ENCODE measurements at regions of chr6 and their contacts with region 1.

Region 1: DNA sequence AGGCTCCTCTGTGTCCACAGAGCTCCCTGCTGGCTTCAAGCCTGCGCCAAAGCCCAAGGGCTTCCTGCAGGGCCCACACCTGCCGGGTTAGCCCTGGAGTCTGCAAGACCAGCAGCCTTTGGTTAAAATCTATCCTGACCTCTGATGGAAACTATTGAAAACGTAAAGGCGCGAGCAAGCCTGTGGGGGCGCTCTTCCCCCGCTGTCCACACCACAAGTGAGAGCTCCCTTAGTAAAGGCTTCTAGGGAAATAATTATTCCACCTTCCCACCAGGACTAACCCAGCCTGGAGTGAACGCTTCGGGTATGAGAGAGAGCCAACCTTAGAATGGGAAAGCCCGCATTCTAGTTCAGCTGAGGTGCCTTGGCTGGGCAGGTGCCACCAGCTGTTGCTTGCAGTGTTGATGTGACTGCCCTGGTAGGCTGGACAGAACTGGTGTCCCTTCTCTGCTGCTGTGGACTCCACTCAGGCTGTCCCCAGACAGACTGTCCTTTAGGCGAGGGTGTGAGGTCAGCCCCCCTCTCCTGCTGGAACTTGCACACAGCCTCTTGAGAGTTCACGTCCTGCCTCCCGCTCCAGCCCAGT is 68.7 kb downstream of the SYTL3 start:
- DNase-seq: peak; percentile 44
- H3K4me3 ChIP-seq: no peak overlapping the region
- H3K27ac ChIP-seq: no peak overlapping the region
- H3K4me1 ChIP-seq: peaks cover 13% of the 10 kb centered on the region
- H3K27me3 ChIP-seq: no peaks in the 10 kb centered on the region
- CTCF ChIP-seq: peak; percentile 66 to 70
- POLR2A ChIP-seq: no peak

Region 2: DNA sequence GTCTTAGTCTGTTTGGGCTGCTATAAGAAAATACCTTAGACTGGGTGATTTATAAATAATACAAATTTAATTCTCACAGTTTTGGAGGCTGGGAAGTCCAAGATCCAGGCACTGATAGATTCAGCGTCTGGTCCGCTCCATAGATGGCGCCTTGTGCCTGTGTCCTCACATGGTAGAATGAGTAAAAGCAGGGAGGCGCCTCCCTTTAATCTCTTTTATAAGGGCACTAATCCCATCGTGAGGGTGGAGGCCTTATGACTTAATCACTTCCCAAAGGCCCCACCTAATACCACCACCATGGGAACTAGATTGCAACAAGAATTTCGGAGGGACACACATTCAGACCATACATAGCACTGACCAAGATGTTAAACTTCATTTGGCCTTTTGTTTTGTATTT is 249.9 kb before region 1 on chr6:
- CTCF ChIA-PET with region 1: no interaction called
- POLR2A ChIA-PET with region 1: interaction called, 13 read pairs
- dilution Hi-C with region 1: no loop called
- intact Hi-C with region 1: no loop called
- DNase-seq: no peak
- H3K4me3 ChIP-seq: no peak overlapping the region
- H3K27ac ChIP-seq: no peak overlapping the region
- H3K4me1 ChIP-seq: peaks cover 7% of the 10 kb centered on the region
- H3K27me3 ChIP-seq: no peaks in the 10 kb centered on the region
- CTCF ChIP-seq: no peak
- POLR2A ChIP-seq: no peak

Region 3: GRCh38 chr6:158666628-158667359 is 51.8 kb before region 1 on chr6:
- CTCF ChIA-PET with region 1: no interaction called
- POLR2A ChIA-PET with region 1: no interaction called
- dilution Hi-C with region 1: no loop called
- intact Hi-C with region 1: no loop called
- DNase-seq: no peak
- H3K4me3 ChIP-seq: no peak overlapping the region
- H3K27ac ChIP-seq: no peak overlapping the region
- H3K4me1 ChIP-seq: no peaks in the 10 kb centered on the region
- H3K27me3 ChIP-seq: peaks cover 19 to 26% of the 10 kb centered on the region in 2 experiments
- CTCF ChIP-seq: no peak
- POLR2A ChIP-seq: no peak

Region 4: DNA sequence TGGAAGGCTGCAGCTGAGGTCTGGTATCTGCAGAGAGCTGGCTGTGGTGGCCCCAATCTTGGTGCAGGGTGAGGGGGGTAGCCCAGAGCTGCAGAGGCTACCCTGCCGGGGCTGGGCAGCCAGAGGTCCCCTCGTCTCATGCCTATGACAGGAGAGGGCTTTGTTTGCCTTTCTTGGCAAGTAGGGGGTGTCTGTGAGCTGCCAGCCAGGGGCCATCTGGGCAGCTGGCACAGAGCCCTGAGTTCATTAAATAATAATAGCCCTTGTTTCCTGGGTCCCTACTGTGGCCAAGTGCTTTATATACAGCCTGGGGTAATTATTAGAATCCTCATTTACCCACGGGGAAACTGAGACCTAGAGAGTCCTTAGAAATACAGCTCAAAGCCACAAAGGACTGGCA is 34.1 kb after region 1 on chr6:
- CTCF ChIA-PET with region 1: interaction called, 13 read pairs
- POLR2A ChIA-PET with region 1: no interaction called
- dilution Hi-C with region 1: no loop called
- intact Hi-C with region 1: no loop called
- DNase-seq: no peak
- H3K4me3 ChIP-seq: no peak overlapping the region
- H3K27ac ChIP-seq: no peak overlapping the region
- H3K4me1 ChIP-seq: peaks cover 7% of the 10 kb centered on the region
- H3K27me3 ChIP-seq: no peaks in the 10 kb centered on the region
- CTCF ChIP-seq: no peak
- POLR2A ChIP-seq: no peak

Region 5: GRCh38 chr6:158793432-158793831 is 74.9 kb after region 1 on chr6:
- CTCF ChIA-PET with region 1: interaction called, 12 read pairs
- POLR2A ChIA-PET with region 1: no interaction called
- dilution Hi-C with region 1: no loop called
- intact Hi-C with region 1: no loop called
- DNase-seq: peak; percentile 37
- H3K4me3 ChIP-seq: no peak overlapping the region
- H3K27ac ChIP-seq: no peak overlapping the region
- H3K4me1 ChIP-seq: no peaks in the 10 kb centered on the region
- H3K27me3 ChIP-seq: no peaks in the 10 kb centered on the region
- CTCF ChIP-seq: peak; percentile 7 to 33
- POLR2A ChIP-seq: no peak

Region 6: GRCh38 chr6:158819213-158819909 is 100.8 kb after region 1 on chr6 and contains the start of gene EZR:
- CTCF ChIA-PET with region 1: no interaction called
- POLR2A ChIA-PET with region 1: no interaction called
- dilution Hi-C with region 1: no loop called
- intact Hi-C with region 1: loop called (anchors 2 kb)
- DNase-seq: peak; percentile 58
- H3K4me3 ChIP-seq: peak within 1 kb of the TSS; percentile 84 to 98 (median 87)
- H3K27ac ChIP-seq: peak within 1 kb of the TSS; percentile 48
- H3K4me1 ChIP-seq: peaks cover 16% of the 10 kb centered on the region
- H3K27me3 ChIP-seq: no peaks in the 10 kb centered on the region
- CTCF ChIP-seq: no peak
- POLR2A ChIP-seq: no peak
- total RNA-seq, gene EZR: 105 and 108 TPM in 2 replicates

Region 7: DNA sequence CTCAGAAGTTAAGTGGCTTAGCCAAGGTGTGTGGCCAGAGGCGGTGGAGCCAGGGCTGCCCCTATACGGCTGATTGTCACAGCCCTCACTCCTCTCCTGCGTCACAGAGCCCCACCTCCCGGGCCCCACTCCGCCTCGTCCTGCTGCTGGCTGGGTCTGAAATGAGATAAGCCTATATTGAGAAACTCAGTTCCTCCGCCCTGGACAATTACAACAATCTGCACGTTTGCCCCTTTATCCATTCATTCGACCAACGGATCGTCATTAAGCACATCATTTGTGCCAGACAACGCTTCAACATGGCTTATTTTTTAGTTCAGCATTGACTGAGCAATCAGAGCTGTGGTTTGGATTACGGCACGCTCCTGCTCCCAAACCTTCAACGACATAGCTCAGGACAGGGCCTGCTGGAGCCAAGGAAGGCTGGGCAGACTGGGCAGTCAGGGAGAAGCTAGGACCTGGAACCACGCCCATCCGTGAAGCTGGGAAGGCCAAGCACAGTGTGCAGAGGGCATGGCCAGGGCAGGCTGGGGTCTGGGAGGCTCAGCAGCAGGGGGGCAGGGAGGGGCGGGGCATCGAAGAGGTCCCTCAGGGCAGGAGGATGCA is 117.2 kb after region 1 on chr6:
- CTCF ChIA-PET with region 1: no interaction called
- POLR2A ChIA-PET with region 1: no interaction called
- dilution Hi-C with region 1: no loop called
- intact Hi-C with region 1: no loop called
- DNase-seq: no peak
- H3K4me3 ChIP-seq: no peak overlapping the region
- H3K27ac ChIP-seq: no peak overlapping the region
- H3K4me1 ChIP-seq: no peaks in the 10 kb centered on the region
- H3K27me3 ChIP-seq: peaks cover 2% of the 10 kb centered on the region in 2 experiments
- CTCF ChIP-seq: no peak
- POLR2A ChIP-seq: no peak

Region 8: DNA sequence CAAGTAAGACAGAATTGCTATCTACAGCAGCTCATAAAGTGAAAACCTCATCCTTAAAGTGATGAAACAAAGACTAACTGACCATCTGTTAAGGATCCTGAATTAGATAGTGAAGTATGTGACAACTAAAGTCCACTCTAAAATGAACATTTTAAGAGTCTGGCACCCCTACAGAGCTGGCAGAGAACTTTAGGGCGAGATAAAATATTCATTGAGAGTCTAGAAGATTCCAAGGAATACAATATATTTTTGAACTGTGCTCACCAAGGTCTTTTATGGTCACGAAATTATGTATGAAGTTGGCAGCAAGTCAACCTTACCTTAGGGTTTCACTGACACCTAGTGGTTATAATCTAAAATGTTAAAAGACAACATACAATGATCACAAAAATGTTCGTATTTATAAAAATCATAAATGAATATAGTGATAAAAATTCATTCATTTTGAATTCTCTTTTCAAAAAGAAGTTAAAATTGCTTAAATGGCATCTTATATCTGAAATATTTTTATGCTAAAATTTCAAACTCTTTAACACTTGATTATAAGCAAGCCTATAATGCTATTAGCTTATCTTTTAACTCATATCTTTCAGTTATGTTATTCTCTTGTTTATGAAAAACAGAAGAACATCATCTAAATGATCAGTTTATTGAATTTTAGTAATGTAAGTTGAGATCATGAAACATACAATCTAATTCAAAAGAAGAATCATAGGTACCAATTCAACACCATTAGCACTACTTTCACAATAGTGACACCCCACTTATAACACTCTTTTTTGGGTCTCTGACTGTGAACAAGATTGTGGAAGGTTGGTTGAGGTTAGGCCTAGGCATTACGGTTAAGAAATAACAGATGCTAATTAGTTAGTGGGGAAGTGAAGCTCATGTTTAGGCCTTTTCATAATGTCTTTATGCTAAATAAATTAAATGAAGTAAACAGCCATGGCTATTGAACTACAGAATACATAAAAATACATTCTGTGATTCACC is 254.0 kb after region 1 on chr6:
- CTCF ChIA-PET with region 1: interaction called, 43 read pairs
- POLR2A ChIA-PET with region 1: no interaction called
- dilution Hi-C with region 1: no loop called
- intact Hi-C with region 1: no loop called
- DNase-seq: peak; percentile 66
- H3K4me3 ChIP-seq: no peak overlapping the region
- H3K27ac ChIP-seq: no peak overlapping the region
- H3K4me1 ChIP-seq: no peaks in the 10 kb centered on the region
- H3K27me3 ChIP-seq: no peaks in the 10 kb centered on the region
- CTCF ChIP-seq: peak in 1 of 2 donors; percentile 14
- POLR2A ChIP-seq: no peak

Measured in endothelial cell of umbilical vein (primary cell).